ENCODE measurements at regions of chr7 and their contacts with region 1.

Region 1: DNA sequence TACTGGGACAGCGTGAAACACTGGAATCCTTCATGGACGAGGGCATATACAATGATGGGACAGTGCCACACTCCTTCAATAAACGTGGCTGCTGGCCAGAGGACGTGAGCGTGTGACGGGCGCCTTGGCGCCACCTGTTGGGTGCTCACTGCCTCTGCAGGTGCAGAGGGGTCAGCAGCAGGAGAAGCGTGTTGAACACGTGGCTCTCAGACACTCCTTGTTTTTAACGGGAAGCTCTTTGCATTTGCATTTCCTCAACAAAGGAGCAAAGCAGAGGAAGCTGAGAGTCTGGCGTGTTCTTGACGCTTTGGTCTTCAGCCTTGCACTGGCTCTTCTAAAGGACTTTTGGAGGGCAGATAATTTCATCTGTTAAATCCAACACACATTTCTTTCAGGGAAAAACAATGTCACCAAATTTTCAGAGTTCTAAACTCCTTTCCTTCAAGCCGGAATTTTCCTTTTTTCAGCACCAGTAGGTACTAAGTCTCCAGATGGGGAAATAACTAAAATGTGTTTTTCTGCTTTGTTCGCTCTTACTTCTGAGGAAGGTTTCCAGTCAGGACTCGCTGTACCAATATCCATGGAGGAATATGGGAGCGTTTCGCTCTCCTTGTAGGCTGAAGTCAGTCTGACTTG is 2.9 kb upstream of the GET4 start:
- DNase-seq: peak; percentile 71 to 82
- H3K4me3 ChIP-seq: no peak overlapping the region
- H3K27ac ChIP-seq: no peak overlapping the region
- H3K4me1 ChIP-seq: peaks cover 0 to 5% (median 0%) of the 10 kb centered on the region in 4 experiments; a peak in 5 of 7 replicates
- H3K27me3 ChIP-seq: no peaks in the 10 kb centered on the region
- CTCF ChIP-seq: peak; percentile 85 to 100 (median 99)
- EP300 ChIP-seq: no peak
- POLR2A ChIP-seq: 0 out of 3 replicates have a peak, but pooled peaks of 1 of the 2 experiments have one; percentile 33
- RAD21 ChIP-seq: peak; percentile 70 to 71

Region 2: DNA sequence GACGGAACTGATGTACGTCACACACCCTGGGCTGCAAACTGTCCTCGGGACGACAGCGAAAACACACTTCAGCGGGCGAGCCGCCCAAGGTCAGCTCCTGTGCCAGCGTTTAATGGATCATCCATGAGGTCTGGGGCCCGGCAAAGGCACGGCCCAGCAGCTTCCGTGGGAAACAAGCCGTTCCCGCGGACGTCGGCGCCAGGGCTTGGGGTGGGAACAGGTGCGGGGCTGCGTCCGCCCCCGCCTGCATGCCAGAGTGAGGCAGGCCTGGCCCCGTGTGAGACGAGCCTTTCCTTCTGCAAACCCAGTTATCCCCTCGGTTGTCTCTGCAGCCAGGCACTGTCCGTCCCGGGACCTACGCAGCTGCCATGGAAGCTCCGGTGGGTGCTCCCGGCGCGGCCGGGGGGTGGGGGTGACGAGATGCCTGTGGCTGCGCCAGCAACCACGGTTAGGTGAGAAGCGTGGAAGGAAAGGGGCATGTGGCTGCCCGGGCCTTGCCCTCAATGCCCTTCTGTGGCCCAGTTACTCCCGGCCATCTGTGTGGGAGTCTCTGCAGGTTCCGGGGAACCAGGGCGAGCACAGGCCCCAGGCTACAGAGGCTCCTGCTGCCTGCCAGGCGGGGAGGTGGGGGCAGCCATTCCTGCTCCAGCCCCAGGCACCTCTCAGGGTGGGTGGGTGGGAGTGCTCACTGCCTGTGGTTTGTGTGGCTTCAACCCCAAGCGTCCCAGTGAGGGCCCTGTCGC is 311.7 kb before region 1 on chr7:
- CTCF ChIA-PET with region 1: no interaction called
- POLR2A ChIA-PET with region 1: no interaction called
- DNase-seq: no peak
- H3K4me3 ChIP-seq: no peak overlapping the region
- H3K27ac ChIP-seq: no peak overlapping the region
- H3K4me1 ChIP-seq: peaks cover 0 to 4% (median under 1%) of the 10 kb centered on the region in 4 experiments; a peak in 1 of 7 replicates
- H3K27me3 ChIP-seq: no peaks in the 10 kb centered on the region
- CTCF ChIP-seq: no peak
- EP300 ChIP-seq: no peak
- POLR2A ChIP-seq: no peak
- RAD21 ChIP-seq: no peak

Region 3: GRCh38 chr7:636396-636795 is 237.1 kb before region 1 on chr7:
- CTCF ChIA-PET with region 1: no interaction called
- POLR2A ChIA-PET with region 1: no interaction called
- DNase-seq: no peak
- H3K4me3 ChIP-seq: no peak overlapping the region
- H3K27ac ChIP-seq: no peak overlapping the region
- H3K4me1 ChIP-seq: no peaks in the 10 kb centered on the region
- H3K27me3 ChIP-seq: no peaks in the 10 kb centered on the region
- CTCF ChIP-seq: peak; percentile 35 to 52 (median 50)
- EP300 ChIP-seq: no peak
- POLR2A ChIP-seq: no peak
- RAD21 ChIP-seq: peak; percentile 56 to 68

Region 4: GRCh38 chr7:786472-787255 is 86.8 kb before region 1 on chr7:
- CTCF ChIA-PET with region 1: interaction called, 38 read pairs
- POLR2A ChIA-PET with region 1: no interaction called
- DNase-seq: peak; percentile 38 to 93
- H3K4me3 ChIP-seq: no peak overlapping the region
- H3K27ac ChIP-seq: no peak overlapping the region
- H3K4me1 ChIP-seq: no peaks in the 10 kb centered on the region
- H3K27me3 ChIP-seq: no peaks in the 10 kb centered on the region
- CTCF ChIP-seq: peak in 2 of 3 experiments; percentile 83 to 91; a peak in 3 of 4 replicates
- EP300 ChIP-seq: no peak
- POLR2A ChIP-seq: no peak
- RAD21 ChIP-seq: peak; percentile 86 to 91

Region 5: DNA sequence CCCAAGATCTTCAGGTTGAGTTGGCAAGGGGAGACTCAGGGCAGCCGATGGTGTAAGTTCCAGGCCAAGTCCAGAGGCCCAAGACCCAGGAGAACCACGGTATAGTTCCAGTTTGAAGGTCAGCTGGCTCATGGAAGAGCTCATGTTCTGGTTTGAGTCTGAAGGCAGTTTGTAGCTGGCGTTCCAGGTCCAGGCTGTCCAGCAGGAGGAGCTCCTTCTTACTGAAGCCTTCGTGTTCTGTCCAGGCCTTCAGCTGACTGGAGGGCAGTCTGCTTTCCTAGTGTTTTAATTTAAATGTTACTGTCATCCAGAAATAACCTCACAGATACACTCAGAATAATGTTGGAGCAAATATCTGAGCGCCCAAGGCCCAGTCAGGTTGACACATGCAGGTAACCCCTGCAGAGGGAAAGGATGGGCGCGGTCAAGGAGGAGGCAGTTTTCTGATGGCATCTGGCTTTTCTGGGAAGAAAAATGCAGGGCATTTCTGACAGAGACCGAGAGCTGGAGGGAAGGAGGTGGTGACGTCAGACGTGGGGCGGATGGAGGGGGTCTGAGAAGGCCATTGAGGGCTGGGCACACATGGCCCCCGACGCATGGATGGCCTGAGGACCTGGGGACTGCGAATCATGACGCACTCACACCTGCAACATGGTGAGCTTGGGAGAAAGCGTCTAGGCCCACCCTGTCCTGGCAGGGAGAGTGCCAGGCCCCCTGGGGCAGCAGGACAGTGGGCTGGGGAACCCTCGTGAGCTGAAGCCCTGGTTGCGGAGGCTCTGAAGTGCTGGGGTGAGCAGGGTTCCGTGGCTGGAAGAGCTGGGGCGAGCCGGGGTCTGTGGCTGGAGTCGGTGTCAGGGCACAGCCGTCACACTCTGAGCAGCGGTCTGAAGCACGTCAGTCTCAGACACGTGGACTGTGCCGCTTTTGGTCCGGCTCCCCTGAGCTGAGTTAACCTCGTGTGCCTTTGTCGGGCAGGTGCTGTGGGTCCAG is 36.8 kb before region 1 on chr7:
- CTCF ChIA-PET with region 1: interaction called, 17 read pairs
- POLR2A ChIA-PET with region 1: no interaction called
- DNase-seq: no peak
- H3K4me3 ChIP-seq: no peak overlapping the region
- H3K27ac ChIP-seq: peak overlapping the region; percentile 12; the same call in 1 of the 2 replicates
- H3K4me1 ChIP-seq: peaks cover 0 to 10% (median 3%) of the 10 kb centered on the region in 4 experiments; a peak in 5 of 7 replicates
- H3K27me3 ChIP-seq: no peaks in the 10 kb centered on the region
- CTCF ChIP-seq: peak; percentile 51 to 64 (median 53)
- EP300 ChIP-seq: no peak
- POLR2A ChIP-seq: no peak
- RAD21 ChIP-seq: peak; percentile 7 to 30; a peak in 2 of 4 replicates

Region 6: DNA sequence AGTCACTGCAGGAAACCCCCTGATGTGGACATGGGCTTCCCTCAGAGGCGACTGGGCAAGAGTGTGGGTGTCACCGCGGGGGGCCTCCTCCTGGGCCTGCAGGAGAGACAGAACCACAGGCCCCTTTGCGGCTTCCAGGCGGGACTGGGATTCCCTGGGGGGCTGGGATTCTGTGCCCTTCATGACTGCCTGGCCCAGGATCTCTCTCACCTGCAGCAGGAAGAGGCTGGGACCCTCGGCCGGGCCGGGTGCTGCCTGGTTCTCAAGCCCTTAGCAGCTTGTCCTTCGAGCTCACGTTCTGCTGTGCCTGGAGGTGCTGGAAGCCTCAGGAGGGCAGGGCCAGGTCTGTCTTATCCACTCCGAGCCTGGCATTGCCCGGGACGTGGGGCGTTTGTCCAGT is 29.4 kb before region 1 on chr7:
- CTCF ChIA-PET with region 1: interaction called, 13 read pairs
- POLR2A ChIA-PET with region 1: interaction called, 3 read pairs
- DNase-seq: no peak
- H3K4me3 ChIP-seq: no peak overlapping the region
- H3K27ac ChIP-seq: no peak overlapping the region
- H3K4me1 ChIP-seq: no peaks in the 10 kb centered on the region
- H3K27me3 ChIP-seq: no peaks in the 10 kb centered on the region
- CTCF ChIP-seq: no peak
- EP300 ChIP-seq: no peak
- POLR2A ChIP-seq: no peak
- RAD21 ChIP-seq: no peak

Region 7: GRCh38 chr7:863106-863505 is 10.4 kb before region 1 on chr7:
- CTCF ChIA-PET with region 1: interaction called, 20 read pairs
- POLR2A ChIA-PET with region 1: interaction called, 5 read pairs
- DNase-seq: no peak
- H3K4me3 ChIP-seq: no peak overlapping the region
- H3K27ac ChIP-seq: no peak overlapping the region
- H3K4me1 ChIP-seq: no peaks in the 10 kb centered on the region
- H3K27me3 ChIP-seq: no peaks in the 10 kb centered on the region
- CTCF ChIP-seq: no peak
- EP300 ChIP-seq: no peak
- POLR2A ChIP-seq: no peak
- RAD21 ChIP-seq: no peak

Measured in H1 (cell line).